Ascending aorta (tissue), 2 donors: ENCODE measurements at regions of chrX and their contacts with region 1.

Region 1: GRCh38 chrX:50812995-50813826 is 783 bp downstream of the SHROOM4 start:
- DNase-seq: peak in 1 of 2 donors; percentile 64
- H3K4me3 ChIP-seq: peak overlapping the region; percentile 54 to 74
- H3K27ac ChIP-seq: peak overlapping the region; percentile 56 to 69
- H3K4me1 ChIP-seq: no peaks in the 10 kb centered on the region
- H3K27me3 ChIP-seq: no peaks in the 10 kb centered on the region
- CTCF ChIP-seq: no peak

Region 2: DNA sequence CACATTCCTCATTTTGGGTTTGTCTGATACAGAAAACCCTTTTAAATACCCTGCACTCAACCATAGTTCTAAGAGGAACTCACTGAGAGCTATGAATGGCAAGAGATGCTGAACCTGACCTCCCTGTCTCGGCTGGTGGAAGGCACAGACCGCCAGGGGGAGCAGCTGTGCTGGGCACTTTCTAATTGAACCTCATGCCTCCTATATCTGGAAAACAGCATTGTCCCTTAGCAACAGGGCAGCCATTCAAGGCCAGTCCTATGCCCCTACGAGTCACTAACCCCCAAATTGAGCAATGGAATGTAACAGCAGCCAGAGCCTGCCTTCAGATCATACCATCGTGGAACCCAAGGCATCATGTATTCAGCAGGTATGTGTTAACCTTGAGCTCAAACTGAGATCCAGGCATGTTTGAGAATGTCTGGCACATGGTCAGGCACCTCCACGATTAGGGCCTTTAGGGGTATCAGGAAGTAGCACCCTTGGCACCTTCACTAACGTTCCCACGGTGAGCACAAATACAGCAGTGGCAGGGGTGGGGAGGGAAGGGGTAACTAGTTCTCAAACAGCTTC is 928.8 kb before region 1 on chrX:
- intact Hi-C with region 1: loop called (anchors 10 kb)
- DNase-seq: peak in 1 of 2 donors; percentile 74
- H3K4me3 ChIP-seq: no peak overlapping the region
- H3K27ac ChIP-seq: no peak overlapping the region
- H3K4me1 ChIP-seq: no peaks in the 10 kb centered on the region
- H3K27me3 ChIP-seq: no peaks in the 10 kb centered on the region
- CTCF ChIP-seq: peak; percentile 20 to 65 (median 56)

Region 3: GRCh38 chrX:50707405-50707804 is 105.8 kb before region 1 on chrX:
- intact Hi-C with region 1: loop called (anchors 5 kb)
- DNase-seq: no peak
- H3K4me3 ChIP-seq: no peak overlapping the region
- H3K27ac ChIP-seq: peak overlapping the region in 1 of 2 donors; percentile 20
- H3K4me1 ChIP-seq: peaks cover 0 to 7% of the 10 kb centered on the region in 2 donors
- H3K27me3 ChIP-seq: no peaks in the 10 kb centered on the region
- CTCF ChIP-seq: no peak